ENCODE measurements at regions of chr12 and their contacts with region 1.

Region 1: DNA sequence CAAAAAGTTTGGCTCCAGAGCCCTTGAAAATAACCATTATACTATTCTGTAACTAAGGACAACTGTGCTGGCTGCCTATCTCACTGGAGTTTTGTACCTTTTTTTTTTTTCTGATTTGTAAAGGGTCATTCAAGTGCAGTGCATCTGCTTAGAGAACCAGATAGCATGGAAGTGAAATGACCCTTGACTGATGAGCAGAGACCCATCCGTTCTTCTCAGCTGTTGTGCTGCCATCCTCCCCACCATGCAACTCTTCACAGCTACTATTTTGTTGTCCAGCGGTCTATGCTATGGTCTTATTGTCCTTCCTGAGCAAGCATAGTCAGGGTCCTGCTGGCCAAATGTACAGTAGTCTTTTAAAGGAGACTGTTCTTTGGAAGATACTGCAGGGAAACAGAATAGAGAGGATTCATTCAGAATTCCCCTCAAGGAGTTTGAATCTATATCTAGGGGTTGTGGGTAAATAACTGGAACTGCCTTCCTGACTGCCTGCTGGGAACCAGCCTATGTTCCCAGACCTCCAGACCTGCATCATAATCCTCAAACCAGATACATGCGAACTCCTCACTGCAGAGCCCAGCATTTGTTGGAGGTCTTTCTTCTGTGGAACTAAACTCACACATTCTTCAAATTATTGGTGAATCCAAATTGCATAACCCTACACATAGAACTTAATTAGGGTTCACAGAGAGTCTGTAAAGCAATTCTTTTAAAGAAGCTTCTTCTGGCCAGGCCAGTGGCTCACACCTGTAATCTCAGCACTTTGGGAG is 41.1 kb downstream of the GPR19 start:
- DNase-seq: no peak
- H3K4me3 ChIP-seq: no peak overlapping the region
- H3K27ac ChIP-seq: no peak overlapping the region
- H3K4me1 ChIP-seq: peaks cover 7% of the 10 kb centered on the region
- CTCF ChIP-seq: no peak

Region 2: GRCh38 chr12:12486661-12487240 is 168.1 kb before region 1 on chr12:
- CTCF ChIA-PET with region 1: no interaction called
- POLR2A ChIA-PET with region 1: no interaction called
- intact Hi-C with region 1: loop called (anchors 10 kb)
- DNase-seq: no peak
- H3K4me3 ChIP-seq: no peak overlapping the region
- H3K27ac ChIP-seq: no peak overlapping the region
- H3K4me1 ChIP-seq: no peaks in the 10 kb centered on the region
- CTCF ChIP-seq: no peak

Region 3: GRCh38 chr12:13061421-13062128 is 406.7 kb after region 1 on chr12:
- CTCF ChIA-PET with region 1: no interaction called
- POLR2A ChIA-PET with region 1: no interaction called
- intact Hi-C with region 1: no loop called
- DNase-seq: no peak
- H3K4me3 ChIP-seq: no peak overlapping the region
- H3K27ac ChIP-seq: no peak overlapping the region
- H3K4me1 ChIP-seq: no peaks in the 10 kb centered on the region
- CTCF ChIP-seq: no peak

Region 4: DNA sequence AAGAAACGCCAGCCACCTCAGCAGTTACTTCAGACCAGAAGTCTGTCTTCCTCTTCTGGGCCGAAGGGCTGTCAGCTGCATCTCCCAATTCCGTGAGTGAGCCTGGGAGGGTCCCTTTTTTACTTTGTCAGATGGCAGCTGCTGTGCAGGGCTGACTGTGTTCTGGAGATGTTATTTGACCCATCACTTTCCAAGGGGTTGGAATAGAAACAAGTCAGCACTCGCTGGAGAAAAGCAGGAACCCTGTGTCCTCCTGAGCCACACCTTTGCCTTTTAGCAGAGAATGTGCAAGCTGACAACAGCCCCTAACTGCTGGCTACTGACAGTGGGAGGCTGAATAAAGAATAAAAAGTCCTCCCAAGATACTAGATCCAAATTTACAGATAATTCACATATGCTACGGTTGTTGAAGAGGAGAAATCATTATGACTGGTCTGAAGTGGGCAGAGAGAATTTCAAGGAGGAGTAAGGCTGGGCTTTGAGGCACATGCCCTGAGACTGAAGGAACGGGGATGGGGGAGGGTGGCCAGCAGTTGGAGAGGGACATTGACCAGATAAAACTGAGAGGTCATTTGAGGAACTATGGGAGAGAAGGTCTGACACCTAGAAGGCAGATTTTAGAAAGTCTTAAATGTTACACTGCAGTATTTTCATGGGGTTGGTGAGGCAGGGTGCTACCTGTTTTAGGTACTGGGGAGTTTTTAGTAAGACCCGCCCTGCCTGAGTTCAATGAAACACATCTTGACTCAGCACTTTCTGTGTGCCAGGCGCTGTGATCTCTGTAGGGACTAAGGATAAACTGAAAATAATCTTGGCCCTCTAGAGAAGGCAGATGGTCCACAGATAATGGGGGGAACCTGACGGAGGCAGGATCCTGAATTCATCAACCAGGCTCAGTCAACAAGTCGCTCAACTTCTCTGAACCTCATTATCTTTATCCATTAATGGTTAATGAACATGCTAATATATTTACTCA is 416.7 kb after region 1 on chr12:
- CTCF ChIA-PET with region 1: no interaction called
- POLR2A ChIA-PET with region 1: no interaction called
- intact Hi-C with region 1: no loop called
- DNase-seq: no peak
- H3K4me3 ChIP-seq: no peak overlapping the region
- H3K27ac ChIP-seq: no peak overlapping the region
- H3K4me1 ChIP-seq: no peaks in the 10 kb centered on the region
- CTCF ChIP-seq: no peak